Naive thymus-derived CD4-positive, alpha-beta T cell (primary cell): ENCODE measurements at regions of chr3 and their contacts with region 1.

Region 1: DNA sequence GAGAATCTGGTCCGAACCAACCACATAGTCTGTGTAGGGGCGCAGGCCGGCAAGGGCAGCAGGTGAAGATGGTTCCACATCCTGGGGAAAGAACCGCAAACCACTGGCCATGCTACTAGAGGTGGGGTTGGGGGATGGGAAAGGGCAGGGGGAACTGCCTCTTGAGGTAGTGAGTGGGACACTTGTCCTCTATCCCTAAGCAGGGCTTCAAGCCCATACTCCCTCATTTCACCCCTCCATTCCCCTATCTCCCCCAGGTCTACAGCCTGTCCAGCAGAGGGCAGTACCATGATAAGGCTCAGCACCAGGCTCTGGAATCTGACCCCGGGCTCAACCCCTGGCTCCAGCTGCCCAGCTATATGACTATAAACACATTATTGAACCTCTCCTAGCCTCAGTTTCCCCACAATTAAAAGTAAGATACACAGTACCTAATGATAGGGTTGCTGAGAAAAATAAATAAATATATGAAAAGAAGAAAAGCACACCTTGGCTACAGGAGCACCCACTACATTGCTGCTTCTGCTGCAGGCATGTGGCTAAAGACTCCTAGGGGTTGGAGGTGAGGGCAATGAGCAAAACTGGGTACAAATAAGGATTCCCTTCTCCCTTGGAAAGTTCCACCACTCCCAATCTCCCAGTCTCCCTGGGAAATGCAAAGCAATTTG is 6.3 kb downstream of the GORASP1 start:
- DNase-seq: peak in 6 of 9 donors; percentile 29 to 56 (median 42)
- ATAC-seq: peak; percentile 78
- H3K4me3 ChIP-seq: no peak overlapping the region
- H3K4me3 Mint-ChIP-seq: no peak overlapping the region
- H3K27ac ChIP-seq: peak overlapping the region; percentile 30
- H3K27ac Mint-ChIP-seq: peak overlapping the region in 7 of 9 donors; percentile 34 to 88 (median 52)
- H3K4me1 ChIP-seq: peaks cover under 1 to 2% of the 10 kb centered on the region in 2 donors
- H3K4me1 Mint-ChIP-seq: peaks cover 28 to 47% (median 37%) of the 10 kb centered on the region in 7 donors
- H3K27me3 ChIP-seq: no peaks in the 10 kb centered on the region
- H3K27me3 Mint-ChIP-seq: peaks cover 0 to 1% (median 0%) of the 10 kb centered on the region in 5 donors

Region 2: DNA sequence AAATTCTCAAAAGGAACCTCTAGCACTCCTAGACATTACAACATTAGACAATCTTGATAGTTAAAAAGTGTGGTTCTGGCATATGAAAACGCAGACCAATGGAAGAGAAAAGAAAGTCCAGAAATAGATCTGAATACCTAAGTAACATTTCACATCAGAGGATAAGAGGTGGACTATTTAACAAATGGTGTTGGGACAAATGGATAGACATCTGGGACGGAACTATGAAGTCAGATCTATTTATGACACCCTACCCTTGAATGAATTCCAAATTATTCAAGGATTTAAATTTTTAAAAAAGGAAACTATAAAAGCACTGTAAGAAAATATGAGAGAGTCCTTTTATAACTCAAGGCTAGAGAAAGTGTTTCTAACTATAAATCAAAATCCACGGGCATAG is 160.8 kb before region 1 on chr3:
- CTCF ChIA-PET with region 1: no interaction called
- POLR2A ChIA-PET with region 1: no interaction called
- intact Hi-C with region 1: no loop called
- DNase-seq: no peak
- ATAC-seq: no peak
- H3K4me3 ChIP-seq: no peak overlapping the region
- H3K4me3 Mint-ChIP-seq: no peak overlapping the region
- H3K27ac ChIP-seq: no peak overlapping the region
- H3K27ac Mint-ChIP-seq: no peak overlapping the region
- H3K4me1 ChIP-seq: no peaks in the 10 kb centered on the region
- H3K4me1 Mint-ChIP-seq: no peaks in the 10 kb centered on the region
- H3K27me3 ChIP-seq: no peaks in the 10 kb centered on the region
- H3K27me3 Mint-ChIP-seq: peaks cover 0 to 6% (median 3%) of the 10 kb centered on the region in 5 donors

Region 3: DNA sequence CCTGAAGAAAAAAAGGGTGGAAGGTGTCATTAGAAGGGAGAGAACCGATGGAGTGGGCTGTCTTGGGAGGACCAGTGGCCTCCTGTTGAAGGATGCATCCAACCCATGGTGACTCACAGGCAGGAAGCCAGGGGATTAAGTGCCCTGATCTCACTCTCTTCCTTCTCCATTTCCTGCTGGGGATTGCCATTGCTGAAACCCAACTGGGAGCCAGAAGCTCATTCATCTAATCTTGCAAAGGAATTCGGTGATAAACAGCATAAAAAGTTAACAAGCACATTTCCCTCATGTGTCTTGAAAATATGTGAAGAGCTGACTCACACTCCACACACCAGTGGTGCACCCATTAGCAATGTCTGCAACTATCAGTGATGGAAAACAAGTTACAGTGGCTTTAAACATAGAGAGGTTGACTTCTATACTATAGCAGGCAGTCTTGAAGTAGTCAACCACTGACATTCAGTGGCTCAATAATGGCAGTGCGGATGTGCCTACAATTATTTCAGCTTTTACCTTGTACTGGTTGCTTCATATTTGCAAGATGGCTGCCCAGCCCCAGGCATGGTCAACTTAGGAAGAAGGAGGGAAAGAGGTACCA is 65.1 kb after region 1 on chr3:
- CTCF ChIA-PET with region 1: no interaction called
- POLR2A ChIA-PET with region 1: no interaction called
- intact Hi-C with region 1: loop called in 1 of 2 experiments (anchors 1 kb)
- DNase-seq: no peak
- ATAC-seq: peak; percentile 36
- H3K4me3 ChIP-seq: no peak overlapping the region
- H3K4me3 Mint-ChIP-seq: no peak overlapping the region
- H3K27ac ChIP-seq: no peak overlapping the region
- H3K27ac Mint-ChIP-seq: no peak overlapping the region
- H3K4me1 ChIP-seq: no peaks in the 10 kb centered on the region
- H3K4me1 Mint-ChIP-seq: peaks cover 0 to 23% (median 0%) of the 10 kb centered on the region in 7 donors
- H3K27me3 ChIP-seq: no peaks in the 10 kb centered on the region
- H3K27me3 Mint-ChIP-seq: no peaks in the 10 kb centered on the region

Region 4: DNA sequence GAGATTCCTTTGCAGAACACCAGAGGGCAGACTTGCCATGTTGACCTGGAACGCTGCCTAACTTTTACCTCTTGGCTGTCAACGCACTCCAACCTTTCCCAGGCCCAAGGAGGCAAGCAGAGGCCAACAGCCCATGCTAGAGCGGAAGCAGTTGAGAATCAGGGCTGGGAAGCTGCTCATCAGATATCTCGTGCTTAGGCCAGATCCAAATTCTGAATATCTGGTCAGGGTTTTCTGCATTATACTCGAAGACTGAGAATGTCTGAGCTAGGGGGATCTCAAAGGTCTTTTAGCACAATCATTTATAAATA is 88.8 kb after region 1 on chr3:
- CTCF ChIA-PET with region 1: no interaction called
- POLR2A ChIA-PET with region 1: no interaction called
- intact Hi-C with region 1: loop called in 1 of 2 experiments (anchors 2 kb)
- DNase-seq: peak; percentile 26 to 63 (median 55)
- ATAC-seq: peak; percentile 80
- H3K4me3 ChIP-seq: no peak overlapping the region
- H3K4me3 Mint-ChIP-seq: no peak overlapping the region
- H3K27ac ChIP-seq: no peak overlapping the region
- H3K27ac Mint-ChIP-seq: peak overlapping the region in 6 of 9 donors; percentile 1 to 79 (median 29)
- H3K4me1 ChIP-seq: peaks cover 0 to 5% of the 10 kb centered on the region in 2 donors
- H3K4me1 Mint-ChIP-seq: peaks cover 4 to 18% (median 6%) of the 10 kb centered on the region in 7 donors
- H3K27me3 ChIP-seq: no peaks in the 10 kb centered on the region
- H3K27me3 Mint-ChIP-seq: no peaks in the 10 kb centered on the region

Region 5: DNA sequence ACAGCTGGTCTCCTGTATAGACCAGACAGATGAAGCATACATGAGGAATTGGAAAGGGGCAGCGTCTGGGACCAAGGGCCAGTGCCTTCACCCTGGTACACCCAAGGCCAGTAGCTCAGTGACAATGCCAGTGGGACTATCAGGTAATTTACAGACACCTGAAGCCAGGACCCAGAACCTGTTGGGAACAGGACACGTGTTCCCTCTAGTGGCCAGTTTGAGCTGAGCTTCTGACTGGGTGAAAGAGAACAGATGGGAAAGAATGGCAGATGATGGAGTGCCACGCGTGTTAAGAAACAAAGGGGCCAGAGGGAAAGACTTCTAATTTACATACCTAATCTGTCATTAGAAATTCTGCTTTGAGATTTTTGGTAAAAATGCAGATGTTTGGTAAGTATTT is 276.9 kb after region 1 on chr3:
- CTCF ChIA-PET with region 1: interaction called, 3 read pairs
- POLR2A ChIA-PET with region 1: no interaction called
- intact Hi-C with region 1: loop called in 1 of 2 experiments (anchors 1 kb)
- DNase-seq: peak in 8 of 9 donors; percentile 32 to 68 (median 62)
- ATAC-seq: peak; percentile 86
- H3K4me3 ChIP-seq: no peak overlapping the region
- H3K4me3 Mint-ChIP-seq: no peak overlapping the region
- H3K27ac ChIP-seq: no peak overlapping the region
- H3K27ac Mint-ChIP-seq: no peak overlapping the region
- H3K4me1 ChIP-seq: peaks cover 6% of the 10 kb centered on the region in 2 donors
- H3K4me1 Mint-ChIP-seq: peaks cover 0 to 20% (median 13%) of the 10 kb centered on the region in 7 donors
- H3K27me3 ChIP-seq: no peaks in the 10 kb centered on the region
- H3K27me3 Mint-ChIP-seq: peaks cover 0 to 3% (median 0%) of the 10 kb centered on the region in 5 donors